Activated naive CD4-positive, alpha-beta T cell treated with anti-CD3 and anti-CD28 coated beads, Interleukin-2, amount 10 ng/mL, durations not matched to agents 7 days and 5 days (primary cell): ENCODE measurements at regions of chr16 and their contacts with region 1.

Region 1: DNA sequence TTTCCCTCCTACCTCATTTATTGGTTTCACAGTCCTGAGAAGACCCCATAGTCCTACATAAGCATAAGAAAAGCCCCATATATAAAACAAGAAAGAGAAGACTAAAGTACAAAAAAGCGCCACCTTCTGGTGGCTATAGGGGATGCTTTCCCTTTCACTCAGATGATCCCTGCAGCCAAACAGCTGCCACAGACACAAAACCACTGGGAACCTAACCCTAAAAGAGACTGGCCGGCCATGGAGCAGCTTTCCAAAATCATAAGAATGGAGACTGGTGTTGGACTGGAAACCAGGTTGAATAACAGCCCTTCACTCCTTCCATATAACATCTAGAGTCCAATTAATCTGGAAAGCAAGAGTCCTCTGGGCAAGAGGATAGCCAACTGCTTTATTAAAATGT is 11.4 kb downstream of the DYNC1LI2 start:
- DNase-seq: peak; percentile 58
- H3K4me3 Mint-ChIP-seq: no peak overlapping the region
- H3K27ac Mint-ChIP-seq: no peak overlapping the region
- H3K4me1 Mint-ChIP-seq: peaks cover 23% of the 10 kb centered on the region
- H3K27me3 Mint-ChIP-seq: no peaks in the 10 kb centered on the region

Region 2: GRCh38 chr16:66660422-66661209 is 79.4 kb before region 1 on chr16:
- CTCF ChIA-PET with region 1: no interaction called
- DNase-seq: no peak
- H3K4me3 Mint-ChIP-seq: no peak overlapping the region
- H3K27ac Mint-ChIP-seq: no peak overlapping the region
- H3K4me1 Mint-ChIP-seq: peaks cover 4% of the 10 kb centered on the region
- H3K27me3 Mint-ChIP-seq: peaks cover 33% of the 10 kb centered on the region

Region 3: GRCh38 chr16:66751303-66751991 is 11.4 kb after region 1 on chr16 and contains the start of gene DYNC1LI2:
- CTCF ChIA-PET with region 1: interaction called, 51 read pairs
- DNase-seq: peak; percentile 87
- H3K4me3 Mint-ChIP-seq: peak within 1 kb of the TSS; percentile 76
- H3K27ac Mint-ChIP-seq: peak within 1 kb of the TSS; percentile 84
- H3K4me1 Mint-ChIP-seq: peaks cover 45% of the 10 kb centered on the region
- H3K27me3 Mint-ChIP-seq: peaks cover 26% of the 10 kb centered on the region

Region 4: DNA sequence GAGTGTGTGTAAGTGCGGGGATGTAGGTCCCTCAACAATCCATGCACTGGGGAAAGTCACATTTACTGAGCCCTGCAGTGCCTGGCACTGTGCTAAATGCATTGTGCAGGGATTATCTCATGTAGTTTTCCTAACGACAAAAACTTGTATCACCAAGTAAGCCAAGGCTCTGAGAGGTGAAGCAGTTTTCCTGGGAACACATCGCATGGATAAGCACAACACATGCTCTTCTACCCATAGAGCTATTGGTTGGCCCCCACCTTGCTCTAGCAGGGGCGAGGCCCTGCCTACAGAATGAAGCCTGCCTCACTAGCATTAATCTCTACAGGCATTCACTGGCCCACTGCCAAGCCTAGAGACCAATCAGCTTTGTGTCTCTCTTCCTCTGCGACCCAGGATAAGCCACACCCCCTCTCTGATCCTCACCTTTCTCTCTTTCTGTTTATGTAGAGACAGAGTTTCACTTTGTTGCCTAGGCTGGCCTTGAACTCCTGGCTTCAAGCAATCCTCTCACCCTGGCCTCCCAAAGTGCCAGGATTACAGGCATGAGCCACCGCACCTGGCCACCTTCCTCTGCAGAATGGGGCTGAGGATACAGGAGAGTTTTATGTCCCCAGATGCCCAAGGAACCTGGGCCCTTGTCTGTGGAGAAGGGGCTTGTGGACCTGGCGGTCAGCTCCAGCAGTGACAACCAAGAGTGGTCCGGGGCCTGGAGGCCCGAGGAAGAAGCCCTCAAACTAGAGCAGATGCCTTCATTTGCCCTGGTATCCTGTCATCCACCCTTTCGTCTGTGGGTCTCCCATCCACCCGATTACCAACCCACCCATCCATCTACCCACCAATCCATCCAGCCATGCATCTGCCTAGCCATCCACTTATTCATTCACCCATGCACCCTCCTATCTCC is 165.9 kb after region 1 on chr16:
- CTCF ChIA-PET with region 1: no interaction called
- DNase-seq: peak; percentile 84
- H3K4me3 Mint-ChIP-seq: no peak overlapping the region
- H3K27ac Mint-ChIP-seq: no peak overlapping the region
- H3K4me1 Mint-ChIP-seq: peaks cover 13% of the 10 kb centered on the region
- H3K27me3 Mint-ChIP-seq: peaks cover 23% of the 10 kb centered on the region